ENCODE measurements at regions of chr17 and their contacts with region 1.

Region 1: DNA sequence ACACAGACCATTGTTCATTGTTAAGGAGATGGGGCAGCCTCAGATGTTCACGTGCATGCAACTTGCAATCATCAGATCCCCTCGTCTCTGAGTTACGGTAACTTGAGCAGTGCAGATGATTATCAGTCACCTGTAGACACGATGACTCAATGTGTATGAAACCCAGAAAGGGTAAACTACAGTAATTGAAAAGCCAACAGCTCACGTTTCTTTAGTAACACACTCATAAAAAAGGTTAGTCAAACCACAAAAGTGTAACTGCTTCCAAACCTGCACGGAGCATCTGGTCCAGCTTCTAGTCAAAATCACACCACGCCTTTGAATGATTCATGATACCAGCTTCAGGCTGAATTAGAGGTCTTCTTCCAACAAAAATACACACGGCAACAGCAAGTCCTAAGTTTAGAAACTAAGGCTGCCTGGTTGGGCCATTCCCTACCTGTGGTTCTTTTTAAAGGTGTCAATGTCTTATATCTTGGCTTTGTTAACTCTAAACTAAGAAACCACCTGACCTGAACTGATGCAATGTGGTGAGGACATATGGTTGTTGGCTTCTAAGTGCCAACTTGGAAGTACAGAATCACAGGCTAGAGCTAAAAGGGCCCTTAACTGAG is 32.3 kb downstream of the GRB7 start:
- DNase-seq: no peak
- ATAC-seq: no peak
- H3K4me3 ChIP-seq: no peak overlapping the region
- H3K27ac ChIP-seq: no peak overlapping the region
- H3K4me1 ChIP-seq: no peaks in the 10 kb centered on the region
- H3K27me3 ChIP-seq: no peaks in the 10 kb centered on the region
- CTCF ChIP-seq: no peak
- POLR2A ChIP-seq: no peak

Region 2: GRCh38 chr17:39822051-39822451 is 52.0 kb after region 1 on chr17:
- intact Hi-C with region 1: loop called in 1 of 2 experiments (anchors 10 kb)
- DNase-seq: no peak
- ATAC-seq: no peak
- H3K4me3 ChIP-seq: no peak overlapping the region
- H3K27ac ChIP-seq: no peak overlapping the region
- H3K4me1 ChIP-seq: no peaks in the 10 kb centered on the region
- H3K27me3 ChIP-seq: no peaks in the 10 kb centered on the region
- CTCF ChIP-seq: no peak
- POLR2A ChIP-seq: no peak